Mucosa of descending colon (tissue), 3 donors: ENCODE measurements at regions of chr17 and their contacts with region 1.

Region 1: GRCh38 chr17:1661045-1661444 is 11.4 kb upstream of the RILP start:
- DNase-seq: no peak
- ATAC-seq: no peak
- H3K4me3 ChIP-seq: no peak overlapping the region
- H3K4me1 ChIP-seq: no peaks in the 10 kb centered on the region
- CTCF ChIP-seq: no peak

Region 2: GRCh38 chr17:1865252-1866037 is 204.4 kb after region 1 on chr17:
- intact Hi-C with region 1: loop called in 1 of 2 experiments (anchors 10 kb)
- DNase-seq: peak in 2 of 3 donors; percentile 41 to 76
- ATAC-seq: peak; percentile 75
- H3K4me3 ChIP-seq: no peak overlapping the region
- H3K4me1 ChIP-seq: no peaks in the 10 kb centered on the region
- CTCF ChIP-seq: peak; percentile 36